Vagina (tissue), 2 donors: ENCODE measurements at regions of chr9 and their contacts with region 1.

Region 1: GRCh38 chr9:107282753-107283625 is at the start of gene RAD23B:
- DNase-seq: peak; percentile 98
- H3K4me3 ChIP-seq: peak within 1 kb of the TSS; percentile 61 to 90
- H3K27ac ChIP-seq: peak within 1 kb of the TSS; percentile 99
- H3K4me1 ChIP-seq: peaks cover 42% of the 10 kb centered on the region
- H3K27me3 ChIP-seq: no peaks in the 10 kb centered on the region
- CTCF ChIP-seq: no peak
- POLR2A ChIP-seq: peak in 1 of 2 donors; percentile 86
- total RNA-seq, gene RAD23B: 61.1 TPM

Region 2: DNA sequence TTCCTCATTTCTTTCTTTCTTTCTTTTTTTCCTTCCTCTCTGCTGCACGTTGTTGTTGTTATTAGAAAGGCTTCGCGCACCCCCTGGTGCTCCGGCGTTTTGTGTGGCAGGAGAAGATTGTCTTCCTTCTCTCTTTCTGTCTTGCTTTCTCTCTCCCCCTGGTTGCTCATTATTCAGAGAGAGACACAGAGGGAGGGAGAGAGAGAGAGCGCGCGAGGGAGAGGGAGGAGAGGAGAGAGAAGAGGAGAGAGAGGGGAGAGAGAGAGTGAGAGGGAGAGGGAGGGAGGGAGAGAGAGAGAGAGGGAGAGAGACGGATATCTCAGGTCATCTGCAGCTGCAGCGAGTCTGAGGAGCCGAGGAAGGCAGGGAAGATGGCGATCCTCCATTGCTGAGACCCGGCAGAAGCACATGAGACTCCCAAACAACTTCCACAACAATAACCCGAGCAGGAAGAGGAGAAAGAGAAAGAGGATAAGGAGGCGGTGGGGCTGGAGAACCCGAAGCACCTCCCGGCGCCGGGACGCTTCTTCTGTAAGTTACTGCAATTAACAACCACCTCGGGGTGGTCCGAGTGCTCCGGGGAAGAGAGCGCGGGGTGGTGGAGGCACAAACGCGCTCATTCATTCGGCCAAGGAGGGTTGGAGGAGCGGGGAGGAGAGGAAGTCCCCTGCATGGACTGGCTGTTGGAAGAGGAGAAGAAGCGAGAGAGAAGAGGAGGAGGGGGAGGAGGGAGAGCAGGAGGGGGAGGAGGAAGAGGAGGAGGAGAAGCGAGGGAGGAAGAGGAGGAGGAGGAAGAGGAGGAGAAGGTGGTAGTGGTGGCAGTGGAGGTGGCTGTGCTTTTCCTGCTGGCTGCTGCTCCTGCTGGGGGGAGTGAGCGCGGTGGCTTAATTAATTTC is 419.9 kb before region 1 on chr9 and contains the start of gene ZNF462:
- intact Hi-C with region 1: loop called (anchors 10 kb)
- DNase-seq: no peak
- H3K4me3 ChIP-seq: peak within 1 kb of the TSS; percentile 77 to 80
- H3K27ac ChIP-seq: peak within 1 kb of the TSS; percentile 91
- H3K4me1 ChIP-seq: peaks cover 42% of the 10 kb centered on the region
- H3K27me3 ChIP-seq: no peaks in the 10 kb centered on the region
- CTCF ChIP-seq: peak; percentile 58 to 99 (median 87)
- POLR2A ChIP-seq: no peak
- total RNA-seq, gene ZNF462: 28.5 TPM